GM18951 (cell line): ENCODE measurements at regions of chr6 and their contacts with region 1.

Region 1: DNA sequence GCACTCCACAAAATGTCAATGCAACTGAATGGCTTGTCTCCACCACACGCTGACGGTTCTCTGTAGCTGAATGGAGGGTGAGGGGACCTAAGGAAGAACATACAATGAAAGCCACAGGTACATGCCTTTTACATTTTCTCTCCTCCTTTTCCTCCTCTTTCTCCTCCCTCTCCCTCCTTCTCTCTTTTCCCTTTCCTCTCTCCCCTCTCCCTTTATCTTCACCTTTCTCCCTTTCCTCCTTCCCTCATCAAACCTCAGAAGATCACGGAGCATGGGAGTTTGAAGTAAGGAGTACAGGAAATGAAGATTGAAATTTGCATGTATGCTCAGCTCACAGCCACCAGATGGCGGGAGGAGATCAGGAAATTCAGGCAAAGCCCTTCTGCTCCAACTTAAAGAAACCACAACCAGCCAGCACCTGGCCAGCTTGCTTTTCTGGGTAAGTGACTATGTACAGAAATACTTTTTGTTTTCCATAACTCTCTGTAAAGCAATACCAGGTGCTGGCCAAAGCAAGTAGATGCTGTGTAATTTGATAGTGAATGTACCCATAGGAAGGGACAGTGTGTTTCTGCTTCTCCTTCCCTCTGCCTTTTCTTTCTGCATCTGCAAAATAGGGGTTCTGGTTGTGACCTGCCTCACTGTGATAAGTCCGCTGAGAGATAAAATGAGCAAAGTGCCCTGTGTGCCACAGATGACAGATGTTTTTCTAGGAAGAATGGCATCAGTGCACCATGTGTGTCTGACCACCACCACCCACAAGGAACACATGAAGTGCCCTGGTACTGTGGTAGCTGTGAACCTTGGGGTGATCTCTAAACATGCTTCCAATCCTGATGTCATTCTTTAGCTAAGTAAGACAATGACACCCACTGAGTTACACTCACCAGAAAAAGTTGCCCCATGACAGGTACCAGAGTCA is 18.6 kb upstream of the FOXO3 start:
- POLR2A ChIP-seq: no peak

Region 2: DNA sequence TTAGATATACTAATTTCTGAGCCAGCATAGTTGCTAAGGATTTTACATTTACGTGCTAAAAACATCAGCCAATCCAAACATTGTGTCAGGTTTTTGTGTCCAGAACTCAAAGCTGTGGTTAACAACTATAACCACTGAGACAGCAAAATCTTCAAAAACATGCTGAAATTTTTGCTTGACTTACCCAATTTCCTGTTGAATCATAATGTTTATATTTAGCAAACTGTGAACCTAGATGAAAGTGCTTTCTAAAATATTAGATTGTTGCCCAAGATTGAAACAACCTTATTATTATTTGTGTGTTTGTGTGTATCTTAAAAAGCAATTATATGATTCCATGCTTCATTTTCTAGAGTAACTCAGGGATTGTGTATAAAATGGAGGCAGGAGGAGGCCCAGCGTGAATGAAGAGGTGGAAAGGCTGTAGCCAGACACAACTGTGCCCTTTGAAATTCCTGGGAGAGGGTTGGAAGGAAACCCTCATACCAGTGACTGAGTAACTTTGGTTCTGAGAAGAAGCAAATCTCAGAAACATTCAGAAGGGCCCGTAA is 354.1 kb after region 1 on chr6:
- in situ Hi-C with region 1: loop called (anchors 10 kb)
- POLR2A ChIP-seq: no peak

Region 3: GRCh38 chr6:109059571-109060021 is 517.5 kb after region 1 on chr6:
- in situ Hi-C with region 1: loop called (anchors 10 kb)
- POLR2A ChIP-seq: no peak